Mammary epithelial cell (primary cell): ENCODE measurements at regions of chrX and their contacts with region 1.

Region 1: DNA sequence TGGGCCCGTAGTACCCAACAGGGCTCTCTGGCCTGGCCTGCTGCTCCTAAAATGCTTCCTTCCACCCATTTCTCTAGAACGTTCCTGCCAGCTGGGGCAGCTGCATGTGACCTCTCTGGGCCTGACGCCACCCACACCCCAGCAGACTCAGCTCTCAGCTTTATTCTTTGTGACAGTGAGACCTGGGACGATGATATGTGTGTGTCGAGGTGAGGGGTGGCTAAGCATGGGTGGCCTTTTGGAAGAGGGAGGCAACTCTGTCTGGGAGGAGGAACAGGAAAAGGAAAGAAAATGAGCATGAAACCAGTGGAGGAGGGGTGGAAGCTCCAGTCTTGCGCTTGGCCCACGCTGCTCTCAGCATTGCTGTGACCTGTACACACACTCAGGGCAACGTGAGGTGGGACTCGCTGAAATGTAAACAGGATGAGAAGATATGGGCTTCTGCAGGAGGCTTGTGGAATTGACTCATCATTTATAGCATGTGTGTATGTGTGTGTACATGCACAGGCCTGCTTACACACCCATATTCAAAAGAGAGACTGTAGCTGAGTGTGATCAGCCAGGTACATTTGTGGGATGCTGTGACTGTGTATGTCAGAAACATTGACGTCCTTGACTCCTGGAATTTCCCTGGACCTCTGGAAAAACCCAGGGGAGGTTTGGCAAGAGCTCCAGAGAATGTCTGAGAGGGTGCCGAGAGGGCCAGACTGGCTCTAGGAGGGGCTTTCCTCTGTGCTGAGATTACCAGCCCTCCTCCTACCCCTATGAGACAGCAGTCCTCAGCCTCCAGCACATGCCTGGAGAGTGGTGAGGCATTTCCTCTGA is 137.9 kb downstream of the PJA1 start:
- DNase-seq: peak; percentile 97
- H3K4me3 ChIP-seq: no peak overlapping the region
- H3K27ac ChIP-seq: peak overlapping the region; percentile 96
- H3K4me1 ChIP-seq: peaks cover 53% of the 10 kb centered on the region
- H3K27me3 ChIP-seq: no peaks in the 10 kb centered on the region
- CTCF ChIP-seq: no peak

Region 2: DNA sequence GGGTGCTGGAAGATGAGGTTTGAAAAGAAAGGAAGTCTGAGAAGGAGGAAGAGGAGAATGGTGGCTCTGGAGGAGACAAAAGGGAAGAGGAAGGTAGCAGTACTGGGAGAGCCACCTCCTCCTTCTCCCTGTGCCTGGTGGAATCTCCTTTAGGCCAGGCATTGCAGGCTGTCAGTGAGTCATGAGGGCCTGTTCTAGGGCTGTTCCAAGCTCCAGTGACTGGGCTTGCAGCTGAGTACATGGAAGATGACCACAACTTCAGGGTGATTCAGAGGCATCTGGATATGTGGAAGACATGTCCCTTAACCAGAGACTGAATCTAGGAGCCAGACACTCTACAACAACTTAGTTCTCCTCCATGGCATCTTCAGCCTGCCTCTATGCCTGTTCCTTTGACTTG is 90.8 kb before region 1 on chrX:
- CTCF ChIA-PET with region 1: no interaction called
- dilution Hi-C with region 1: no loop called
- in situ Hi-C with region 1: no loop called
- intact Hi-C with region 1: loop called (anchors 2 kb)
- DNase-seq: peak; percentile 88
- H3K4me3 ChIP-seq: no peak overlapping the region
- H3K27ac ChIP-seq: peak overlapping the region; percentile 50
- H3K4me1 ChIP-seq: peaks cover 28% of the 10 kb centered on the region
- H3K27me3 ChIP-seq: no peaks in the 10 kb centered on the region
- CTCF ChIP-seq: no peak

Region 3: GRCh38 chrX:68995780-68996551 is 31.4 kb before region 1 on chrX:
- CTCF ChIA-PET with region 1: no interaction called
- dilution Hi-C with region 1: no loop called
- in situ Hi-C with region 1: no loop called
- intact Hi-C with region 1: loop called (anchors 1 kb)
- DNase-seq: peak; percentile 35
- H3K4me3 ChIP-seq: no peak overlapping the region
- H3K27ac ChIP-seq: no peak overlapping the region
- H3K4me1 ChIP-seq: peaks cover 37% of the 10 kb centered on the region
- H3K27me3 ChIP-seq: no peaks in the 10 kb centered on the region
- CTCF ChIP-seq: no peak

Region 4: GRCh38 chrX:69128576-69128975 is 101.2 kb after region 1 on chrX:
- CTCF ChIA-PET with region 1: no interaction called
- dilution Hi-C with region 1: no loop called
- in situ Hi-C with region 1: loop called in 1 of 2 experiments (anchors 10 kb)
- intact Hi-C with region 1: no loop called
- DNase-seq: no peak
- H3K4me3 ChIP-seq: no peak overlapping the region
- H3K27ac ChIP-seq: no peak overlapping the region
- H3K4me1 ChIP-seq: peaks cover 22% of the 10 kb centered on the region
- H3K27me3 ChIP-seq: no peaks in the 10 kb centered on the region
- CTCF ChIP-seq: no peak